ENCODE measurements at regions of chr21 and their contacts with region 1.

Region 1: DNA sequence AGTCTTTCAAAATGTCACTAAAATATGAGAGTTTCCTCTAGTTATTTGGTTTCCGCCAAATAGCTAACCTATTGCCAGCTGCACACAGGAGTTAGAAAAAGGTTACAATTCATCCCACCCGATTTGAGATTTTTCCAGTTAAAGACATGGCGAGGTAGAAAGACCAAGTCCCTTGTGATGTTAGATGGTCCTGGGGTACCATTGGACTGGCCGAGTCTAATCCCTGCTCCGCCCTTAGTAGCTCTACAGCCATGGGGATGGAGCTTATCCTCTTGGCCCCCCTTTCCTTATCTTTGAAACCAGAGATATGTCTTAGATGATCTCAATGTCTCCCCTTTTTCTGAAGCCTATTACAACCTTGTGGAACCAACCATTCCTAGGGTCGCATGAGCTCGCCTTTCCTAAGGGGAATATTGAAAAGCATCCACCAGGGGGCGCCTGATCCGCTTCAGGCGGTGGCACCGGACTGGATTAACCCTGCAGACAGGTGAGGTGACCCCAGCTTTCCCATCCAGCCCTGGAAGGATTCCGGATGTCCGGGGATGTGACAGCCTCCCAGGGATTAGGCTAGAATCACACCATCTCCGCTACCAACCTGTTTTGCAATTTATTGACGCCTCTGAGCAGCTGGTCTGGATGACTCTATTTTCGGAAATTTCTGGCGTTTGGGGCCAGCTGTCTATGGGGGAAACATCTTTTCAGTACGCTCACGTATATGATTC is 68.3 kb upstream of the SIM2 start:
- DNase-seq: peak; percentile 77
- ATAC-seq: peak; percentile 37
- H3K4me3 Mint-ChIP-seq: no peak overlapping the region
- H3K27ac Mint-ChIP-seq: no peak overlapping the region
- H3K4me1 Mint-ChIP-seq: no peaks in the 10 kb centered on the region
- H3K27me3 Mint-ChIP-seq: peaks cover 3% of the 10 kb centered on the region
- CTCF ChIP-seq: peak; percentile 87

Region 2: DNA sequence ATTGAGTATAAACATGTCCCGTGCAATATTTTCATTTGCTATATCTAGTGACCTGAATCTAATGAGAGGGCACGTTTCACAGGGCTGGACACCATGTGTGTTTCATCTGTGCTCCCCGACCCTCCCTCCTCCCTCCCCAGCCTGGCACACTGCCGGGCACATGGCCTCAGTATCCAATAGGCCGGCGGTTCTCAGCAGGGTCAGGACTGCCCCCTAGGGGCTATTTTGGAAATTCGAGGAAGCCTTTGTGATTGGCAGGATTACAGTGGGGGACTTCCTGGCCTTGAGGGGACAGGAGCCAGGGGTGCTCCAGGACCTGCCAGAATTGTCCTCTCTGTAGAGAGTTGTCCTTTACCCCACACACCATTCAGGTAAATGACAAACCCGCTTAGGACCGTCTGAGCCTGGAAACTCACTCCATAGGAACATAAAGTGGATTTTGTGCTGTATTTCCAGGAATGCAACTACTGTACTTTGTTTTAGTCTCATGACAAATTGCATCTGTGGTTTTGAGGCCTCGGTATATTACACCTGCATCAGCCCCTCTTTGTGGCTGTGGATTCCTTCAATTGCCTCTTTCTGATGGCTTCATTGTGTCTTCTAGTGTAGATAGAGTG is 41.2 kb before region 1 on chr21:
- CTCF ChIA-PET with region 1: interaction called, 11 read pairs
- POLR2A ChIA-PET with region 1: no interaction called
- intact Hi-C with region 1: no loop called
- DNase-seq: peak; percentile 56
- ATAC-seq: peak; percentile 85
- H3K4me3 Mint-ChIP-seq: no peak overlapping the region
- H3K27ac Mint-ChIP-seq: no peak overlapping the region
- H3K4me1 Mint-ChIP-seq: peaks cover 5% of the 10 kb centered on the region
- H3K27me3 Mint-ChIP-seq: no peaks in the 10 kb centered on the region
- CTCF ChIP-seq: peak; percentile 62

Region 3: GRCh38 chr21:36640721-36641244 is 10.1 kb after region 1 on chr21:
- CTCF ChIA-PET with region 1: interaction called, 17 read pairs
- POLR2A ChIA-PET with region 1: no interaction called
- intact Hi-C with region 1: no loop called
- DNase-seq: no peak
- ATAC-seq: no peak
- H3K4me3 Mint-ChIP-seq: no peak overlapping the region
- H3K27ac Mint-ChIP-seq: no peak overlapping the region
- H3K4me1 Mint-ChIP-seq: peaks cover 7% of the 10 kb centered on the region
- H3K27me3 Mint-ChIP-seq: peaks cover 1% of the 10 kb centered on the region
- CTCF ChIP-seq: no peak

Region 4: GRCh38 chr21:36684957-36685714 is 54.5 kb after region 1 on chr21:
- CTCF ChIA-PET with region 1: interaction called, 29 read pairs
- POLR2A ChIA-PET with region 1: interaction called, 3 read pairs
- intact Hi-C with region 1: no loop called
- DNase-seq: no peak
- ATAC-seq: no peak
- H3K4me3 Mint-ChIP-seq: no peak overlapping the region
- H3K27ac Mint-ChIP-seq: no peak overlapping the region
- H3K4me1 Mint-ChIP-seq: no peaks in the 10 kb centered on the region
- H3K27me3 Mint-ChIP-seq: peaks cover 49% of the 10 kb centered on the region
- CTCF ChIP-seq: no peak

Region 5: DNA sequence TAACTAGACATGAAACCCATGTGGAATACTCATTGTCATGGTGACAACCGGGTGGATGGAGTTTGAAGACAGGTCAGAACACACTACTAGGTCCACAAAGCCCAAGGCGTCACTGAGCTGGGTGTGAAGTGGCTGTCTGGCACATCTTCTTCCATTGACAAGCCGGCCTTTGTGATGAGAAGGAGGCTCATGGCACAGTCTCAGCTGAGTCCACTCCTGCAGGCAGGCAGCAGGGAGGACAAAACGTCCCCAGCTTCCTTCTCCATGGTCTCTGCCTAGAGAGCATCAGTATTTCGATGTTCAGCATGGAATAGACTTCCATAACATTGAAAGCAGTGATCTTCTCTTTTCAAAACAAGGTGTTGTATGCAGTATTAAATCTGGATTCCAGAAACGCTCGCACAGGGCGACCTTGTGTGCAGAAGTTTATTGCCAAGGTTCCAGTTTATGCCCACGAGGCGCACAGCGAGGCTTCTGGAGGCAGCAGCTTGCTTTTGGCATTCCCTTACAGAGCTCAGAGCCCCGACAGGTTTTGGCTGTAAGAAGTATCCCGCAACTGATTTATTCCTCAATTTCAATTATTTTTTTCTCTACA is 172.5 kb after region 1 on chr21:
- CTCF ChIA-PET with region 1: no interaction called
- POLR2A ChIA-PET with region 1: no interaction called
- intact Hi-C with region 1: no loop called
- DNase-seq: no peak
- ATAC-seq: no peak
- H3K4me3 Mint-ChIP-seq: no peak overlapping the region
- H3K27ac Mint-ChIP-seq: no peak overlapping the region
- H3K4me1 Mint-ChIP-seq: no peaks in the 10 kb centered on the region
- H3K27me3 Mint-ChIP-seq: no peaks in the 10 kb centered on the region
- CTCF ChIP-seq: no peak

Region 6: GRCh38 chr21:36927719-36928117 is 297.1 kb after region 1 on chr21:
- CTCF ChIA-PET with region 1: interaction called, 22 read pairs
- POLR2A ChIA-PET with region 1: no interaction called
- intact Hi-C with region 1: loop called (anchors 5 kb)
- DNase-seq: peak; percentile 87
- ATAC-seq: peak; percentile 80
- H3K4me3 Mint-ChIP-seq: no peak overlapping the region
- H3K27ac Mint-ChIP-seq: no peak overlapping the region
- H3K4me1 Mint-ChIP-seq: peaks cover 18% of the 10 kb centered on the region
- H3K27me3 Mint-ChIP-seq: no peaks in the 10 kb centered on the region
- CTCF ChIP-seq: peak; percentile 98